OCI-LY7 (cell line): ENCODE measurements at regions of chr9 and their contacts with region 1.

Region 1: DNA sequence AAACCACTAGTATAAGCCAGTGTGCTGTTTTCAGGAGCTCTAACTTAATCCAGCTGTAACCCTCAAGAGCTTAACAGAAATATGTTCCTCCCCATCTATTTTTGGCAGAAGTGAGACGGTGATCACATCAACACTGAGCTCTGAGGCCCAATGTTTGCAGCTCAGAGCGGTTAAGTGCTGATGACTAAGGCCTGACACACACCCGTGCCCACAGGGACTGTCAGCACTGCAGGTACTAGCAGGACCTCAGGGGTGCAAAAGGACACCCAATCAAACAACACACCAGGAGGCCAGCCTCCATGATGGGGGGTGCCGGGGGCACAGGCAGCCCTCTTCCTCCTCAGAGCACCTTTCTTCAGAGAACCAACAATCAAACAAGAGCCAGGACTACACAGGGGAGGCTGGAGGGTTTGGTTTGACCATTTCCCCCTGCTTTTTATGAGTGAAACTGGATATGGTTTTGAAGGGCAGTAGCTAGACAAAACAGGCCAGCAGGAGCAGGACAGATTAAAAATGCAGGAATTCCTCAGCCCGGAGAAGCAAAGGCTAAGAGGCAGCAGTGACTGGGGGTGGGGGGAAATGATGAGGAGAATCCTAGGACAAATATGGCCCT is 61.3 kb downstream of the RAPGEF1 start:
- DNase-seq: peak; percentile 90
- H3K4me3 ChIP-seq: peak overlapping the region; percentile 76
- H3K27ac ChIP-seq: peak overlapping the region; percentile 98
- H3K4me1 ChIP-seq: peaks cover 53% of the 10 kb centered on the region
- CTCF ChIP-seq: no peak

Region 2: GRCh38 chr9:131277910-131278701 is 400.5 kb before region 1 on chr9:
- CTCF ChIA-PET with region 1: no interaction called
- POLR2A ChIA-PET with region 1: interaction called, 5 read pairs
- intact Hi-C with region 1: loop called (anchors 10 kb)
- DNase-seq: peak; percentile 86
- H3K4me3 ChIP-seq: peak overlapping the region; percentile 90
- H3K27ac ChIP-seq: peak overlapping the region; percentile 54
- H3K4me1 ChIP-seq: peaks cover 17% of the 10 kb centered on the region
- CTCF ChIP-seq: no peak

Region 3: DNA sequence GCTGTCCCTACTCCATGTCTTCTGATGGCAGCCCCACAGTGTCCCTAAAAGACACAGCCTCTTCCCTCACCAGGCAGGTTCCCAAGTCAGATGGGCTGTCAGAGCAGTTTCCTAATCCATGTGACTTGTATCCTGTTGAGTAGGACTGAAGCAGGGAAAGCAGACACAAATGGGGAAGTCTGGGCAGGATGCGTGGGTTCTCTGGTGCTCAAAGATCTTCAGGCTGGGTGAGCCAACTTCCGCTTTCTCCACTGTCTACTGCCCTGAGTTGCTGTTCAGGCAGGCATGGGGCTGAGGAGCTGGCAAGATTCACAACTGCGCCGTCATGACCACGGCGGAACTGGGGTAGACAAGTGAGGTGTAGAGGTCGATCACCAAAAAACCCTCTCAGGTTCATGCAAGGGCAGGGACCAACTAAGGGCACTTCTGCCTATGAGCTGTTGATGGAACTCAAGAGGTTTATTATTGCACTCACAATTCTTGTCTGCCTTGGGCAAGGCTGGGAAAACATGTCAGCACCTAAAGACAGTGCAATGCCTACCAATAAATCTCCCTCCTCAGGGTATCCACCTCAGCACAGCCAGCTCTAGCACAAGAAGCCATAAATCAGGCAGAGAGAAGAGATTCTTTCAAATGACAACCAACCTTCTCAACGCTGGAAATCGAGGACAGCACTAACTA is 22.1 kb before region 1 on chr9:
- CTCF ChIA-PET with region 1: interaction called, 3 read pairs
- POLR2A ChIA-PET with region 1: interaction called, 62 read pairs
- intact Hi-C with region 1: loop called (anchors 1 kb)
- DNase-seq: peak; percentile 93
- H3K4me3 ChIP-seq: peak overlapping the region; percentile 51
- H3K27ac ChIP-seq: peak overlapping the region; percentile 95
- H3K4me1 ChIP-seq: peaks cover 100% of the 10 kb centered on the region
- CTCF ChIP-seq: no peak

Region 4: DNA sequence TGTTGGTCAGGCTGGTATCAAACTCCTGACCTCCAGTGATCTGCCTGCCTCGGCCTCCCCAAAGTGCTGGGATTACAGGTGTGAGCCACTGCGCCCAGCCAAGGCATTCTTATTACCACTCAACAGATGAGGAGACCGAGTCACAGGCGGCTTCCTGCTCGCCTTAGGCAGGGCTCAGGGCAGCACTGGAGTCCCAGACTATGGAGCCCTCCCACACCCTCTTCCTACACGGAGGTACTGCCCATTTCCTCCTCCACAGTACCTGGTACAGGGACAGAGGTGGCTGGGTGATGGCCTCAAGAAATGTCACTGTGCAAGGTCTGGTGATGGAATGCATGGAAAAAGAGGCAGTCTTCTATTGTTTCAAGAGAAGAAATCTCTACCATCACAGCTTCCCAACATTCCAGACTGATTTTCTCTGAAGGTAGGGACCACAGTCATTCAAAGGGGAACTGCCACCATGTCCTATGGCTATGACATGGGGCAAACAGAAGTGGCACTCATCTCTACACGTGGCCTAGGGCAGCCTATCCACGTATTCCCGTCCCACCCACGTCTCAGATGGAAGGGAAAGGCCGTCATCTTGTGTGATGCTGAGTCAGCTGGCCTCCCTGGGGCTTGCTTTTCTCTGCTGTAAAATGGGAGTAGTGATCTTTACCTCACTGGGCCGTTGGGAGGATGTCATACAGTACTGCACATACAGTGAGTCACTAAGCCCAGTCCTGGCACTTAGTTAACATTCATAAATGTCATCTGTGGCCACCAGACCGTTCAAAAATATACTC is 11.2 kb before region 1 on chr9:
- CTCF ChIA-PET with region 1: no interaction called
- POLR2A ChIA-PET with region 1: interaction called, 21 read pairs
- intact Hi-C with region 1: no loop called
- DNase-seq: no peak
- H3K4me3 ChIP-seq: peak overlapping the region; percentile 76
- H3K27ac ChIP-seq: peak overlapping the region; percentile 98
- H3K4me1 ChIP-seq: peaks cover 99% of the 10 kb centered on the region
- CTCF ChIP-seq: no peak

Region 5: DNA sequence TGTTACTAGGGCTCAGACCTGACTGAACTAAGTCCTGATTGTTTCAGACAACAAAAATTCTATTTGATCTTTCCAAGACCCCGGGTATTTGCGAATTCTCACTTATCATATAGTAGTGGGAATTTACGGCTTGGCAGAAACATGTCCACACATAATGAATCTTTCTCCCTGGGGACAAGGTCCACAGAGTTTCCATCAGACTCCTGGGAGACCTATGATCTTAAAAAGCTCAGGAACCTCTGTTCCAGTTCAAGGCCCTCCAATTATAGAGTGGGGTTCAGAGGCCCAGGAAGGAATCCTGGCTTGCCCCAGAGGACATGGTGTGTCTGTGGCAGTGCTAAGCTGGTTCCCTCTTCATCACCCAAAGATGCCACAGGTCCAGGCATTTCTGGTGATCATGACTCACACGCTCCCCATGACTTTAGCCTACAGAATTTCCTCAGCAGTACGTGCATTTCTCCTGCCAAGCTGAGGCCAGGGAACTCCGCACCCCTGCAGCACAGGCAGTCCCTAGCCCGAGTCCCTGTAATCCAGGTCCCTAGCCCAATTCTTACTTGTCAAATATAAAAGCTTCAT is 48.7 kb after region 1 on chr9:
- CTCF ChIA-PET with region 1: interaction called, 11 read pairs
- POLR2A ChIA-PET with region 1: interaction called, 347 read pairs
- intact Hi-C with region 1: loop called (anchors 1 kb)
- DNase-seq: no peak
- H3K4me3 ChIP-seq: peak overlapping the region; percentile 62
- H3K27ac ChIP-seq: peak overlapping the region; percentile 100
- H3K4me1 ChIP-seq: peaks cover 99% of the 10 kb centered on the region
- CTCF ChIP-seq: no peak

Region 6: GRCh38 chr9:131739980-131740648 is 61.5 kb after region 1 on chr9 and contains the start of gene RAPGEF1:
- CTCF ChIA-PET with region 1: interaction called, 4 read pairs
- POLR2A ChIA-PET with region 1: interaction called, 84 read pairs
- intact Hi-C with region 1: loop called (anchors 2 kb)
- DNase-seq: peak; percentile 84
- H3K4me3 ChIP-seq: peak within 1 kb of the TSS; percentile 81
- H3K27ac ChIP-seq: peak within 1 kb of the TSS; percentile 100
- H3K4me1 ChIP-seq: peaks cover 70% of the 10 kb centered on the region
- CTCF ChIP-seq: peak; percentile 82
- total RNA-seq, gene RAPGEF1: 114 and 118 TPM in 2 replicates

Region 7: DNA sequence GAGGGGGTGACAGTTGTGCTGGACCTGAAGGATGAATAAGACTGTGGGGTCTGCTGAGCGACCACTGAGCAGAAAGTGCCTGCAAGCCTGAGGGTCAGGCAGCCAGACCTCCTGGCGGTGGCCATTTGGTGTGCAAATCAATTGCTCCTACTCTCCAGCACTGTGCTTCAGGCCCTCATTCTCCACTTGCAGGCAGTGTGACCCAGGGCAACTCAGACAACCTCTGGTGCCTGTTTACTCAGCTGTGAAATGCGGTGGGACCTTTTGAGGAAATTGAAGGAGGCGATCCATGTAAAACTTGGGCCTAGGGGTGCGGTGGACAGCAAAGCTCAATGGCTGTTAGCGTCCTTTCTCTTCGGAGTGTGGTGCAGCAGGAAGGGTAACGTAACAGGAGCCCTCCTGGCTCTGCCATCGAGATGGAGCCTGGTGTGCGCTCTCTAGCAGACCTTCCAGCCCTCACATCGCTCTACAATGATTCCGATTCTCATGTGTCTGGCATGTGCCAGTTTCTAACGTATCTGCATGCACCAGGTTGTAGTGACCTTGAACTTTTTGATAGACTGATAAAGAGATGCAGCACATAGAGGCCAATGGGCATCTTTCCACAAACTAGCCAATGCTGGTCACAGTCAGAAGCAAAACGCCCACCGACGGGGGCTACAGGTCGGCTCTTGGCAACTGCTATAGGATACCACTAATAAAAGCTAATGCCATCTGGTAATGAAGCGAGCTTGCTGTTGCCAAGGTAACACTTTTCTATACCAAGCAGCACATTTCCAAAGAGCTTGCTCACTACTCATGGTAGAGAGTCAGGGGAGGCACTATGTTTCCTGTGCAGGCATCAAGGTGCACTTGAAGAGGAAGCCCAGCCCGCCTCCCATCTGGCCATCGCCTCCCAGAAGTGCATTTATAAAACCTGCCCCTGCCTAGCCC is 221.0 kb after region 1 on chr9:
- CTCF ChIA-PET with region 1: no interaction called
- POLR2A ChIA-PET with region 1: no interaction called
- intact Hi-C with region 1: no loop called
- DNase-seq: no peak
- H3K4me3 ChIP-seq: no peak overlapping the region
- H3K27ac ChIP-seq: no peak overlapping the region
- H3K4me1 ChIP-seq: no peaks in the 10 kb centered on the region
- CTCF ChIP-seq: no peak